ENCODE measurements at regions of chr18 and their contacts with region 1.

Region 1: GRCh38 chr18:38545071-38545470 is 979.5 kb upstream of the CELF4 start:
- DNase-seq: peak; percentile 9
- CTCF ChIP-seq: peak; percentile 28

Region 2: GRCh38 chr18:38563396-38563980 is 18.4 kb after region 1 on chr18:
- CTCF ChIA-PET with region 1: interaction called, 10 read pairs
- POLR2A ChIA-PET with region 1: no interaction called
- DNase-seq: no peak
- CTCF ChIP-seq: no peak

Measured in GM10248 (cell line).